GM13977 (cell line): ENCODE measurements at regions of chr7 and their contacts with region 1.

Region 1: GRCh38 chr7:82049891-82050533 is 280.2 kb upstream of the HGF start:
- DNase-seq: no peak
- CTCF ChIP-seq: no peak

Region 2: GRCh38 chr7:81339946-81340345 is 710.1 kb before region 1 on chr7:
- in situ Hi-C with region 1: no loop called
- DNase-seq: no peak
- CTCF ChIP-seq: no peak

Region 3: GRCh38 chr7:82572195-82572880 is 522.3 kb after region 1 on chr7:
- in situ Hi-C with region 1: loop called (anchors 25 kb)
- DNase-seq: peak; percentile 74
- CTCF ChIP-seq: peak; percentile 89